Dendritic cell treated with granulocyte-macrophage colony-stimulating factor and Interleukin-4, amounts not matched to agents 40 ng/mL and 50 ng/mL, for 4 days (primary cell): ENCODE measurements at regions of chr3 and their contacts with region 1.

Region 1: DNA sequence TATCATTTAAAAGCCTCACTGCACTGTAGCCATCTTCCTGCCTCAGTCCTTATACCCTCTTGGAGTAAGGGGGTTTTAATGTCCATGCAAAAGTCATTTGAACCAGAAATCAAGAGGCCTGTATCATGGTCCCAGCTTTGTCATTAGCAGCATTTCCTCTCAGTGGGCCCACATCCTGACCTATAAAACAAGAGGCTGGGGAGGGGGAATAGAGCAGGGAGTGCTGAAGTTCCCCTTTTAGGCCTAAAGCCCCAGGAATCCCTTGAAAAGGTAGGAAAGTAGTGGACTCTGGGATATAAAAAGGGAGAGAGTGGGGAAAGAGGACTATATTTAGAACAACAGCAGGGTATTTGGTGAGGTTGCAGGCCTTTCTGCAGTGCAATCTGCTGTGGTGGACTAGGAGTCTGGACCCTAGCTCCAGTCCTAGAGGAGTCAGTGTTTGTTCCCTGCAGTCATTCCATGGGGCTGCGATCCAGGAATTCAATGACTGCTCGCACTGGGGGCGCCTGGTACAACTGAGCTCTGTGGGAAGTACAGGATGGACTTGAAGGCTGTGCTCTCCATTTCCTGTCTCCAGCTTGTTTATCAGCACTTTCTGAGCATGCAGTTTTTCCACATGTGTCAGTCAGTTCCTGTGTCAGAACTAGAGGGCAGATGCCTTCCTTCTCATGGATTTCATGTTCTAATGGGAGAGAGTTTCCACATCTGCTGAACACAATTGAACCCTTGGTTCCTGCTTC is 46.8 kb downstream of the PDHB start:
- H3K4me3 Mint-ChIP-seq: no peak overlapping the region
- H3K27ac Mint-ChIP-seq: peak overlapping the region; percentile 69
- H3K4me1 Mint-ChIP-seq: peaks cover 25% of the 10 kb centered on the region
- H3K27me3 Mint-ChIP-seq: no peaks in the 10 kb centered on the region

Region 2: GRCh38 chr3:58349792-58350626 is 36.8 kb before region 1 on chr3:
- intact Hi-C with region 1: loop called (anchors 5 kb)
- H3K4me3 Mint-ChIP-seq: no peak overlapping the region
- H3K27ac Mint-ChIP-seq: peak overlapping the region; percentile 90
- H3K4me1 Mint-ChIP-seq: peaks cover 77% of the 10 kb centered on the region
- H3K27me3 Mint-ChIP-seq: no peaks in the 10 kb centered on the region